ENCODE measurements at regions of chr17 and their contacts with region 1.

Region 1: DNA sequence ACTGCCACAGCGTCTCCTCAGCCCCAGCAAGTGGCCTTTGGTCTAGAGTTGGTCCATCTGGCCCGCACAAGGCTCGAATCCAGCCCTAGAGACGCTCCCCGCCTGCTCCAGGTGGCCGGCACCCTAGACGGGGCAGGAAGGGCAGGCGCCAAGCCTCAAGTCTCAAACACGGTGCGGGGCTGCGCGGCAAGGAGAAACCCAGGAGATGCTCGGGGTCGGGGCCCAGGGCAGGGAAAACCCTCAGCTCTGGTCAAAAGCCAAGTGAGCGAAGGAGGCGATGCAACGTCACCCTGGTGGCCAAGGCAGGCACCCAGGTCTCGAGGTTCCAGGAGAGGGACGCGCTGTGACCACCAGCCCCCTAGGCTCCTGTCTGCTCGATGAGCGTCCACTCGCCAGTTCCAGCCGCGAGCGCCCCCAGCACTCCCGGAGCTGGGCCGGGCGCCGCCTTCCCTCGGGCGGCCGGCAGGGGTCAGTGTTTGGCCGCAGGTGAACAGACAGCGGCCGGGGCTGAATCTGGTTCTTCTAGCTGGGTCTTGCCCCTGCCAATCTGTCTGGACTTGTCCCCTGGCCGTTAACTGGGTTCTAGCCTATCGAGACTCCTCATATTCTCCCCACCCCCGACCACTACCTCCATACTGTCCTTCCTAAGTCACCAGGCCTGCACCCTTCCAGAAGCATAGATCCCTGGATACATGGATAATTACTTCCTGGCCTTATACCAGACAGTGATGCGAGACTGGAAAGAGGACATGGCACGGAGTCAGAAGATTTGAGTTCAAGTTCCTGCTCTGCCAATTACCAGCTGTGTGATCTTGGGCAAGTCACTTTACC is 44.0 kb downstream of the PRAC1 start:
- DNase-seq: peak; percentile 89
- ATAC-seq: peak; percentile 95
- H3K4me3 Mint-ChIP-seq: peak overlapping the region; percentile 64
- H3K27ac Mint-ChIP-seq: no peak overlapping the region
- H3K4me1 Mint-ChIP-seq: peaks cover 7% of the 10 kb centered on the region
- H3K27me3 Mint-ChIP-seq: peaks cover 37% of the 10 kb centered on the region
- CTCF ChIP-seq: peak; percentile 95

Region 2: GRCh38 chr17:48642439-48643263 is 35.7 kb before region 1 on chr17:
- CTCF ChIA-PET with region 1: interaction called, 17 read pairs
- POLR2A ChIA-PET with region 1: no interaction called
- DNase-seq: peak; percentile 80
- ATAC-seq: peak; percentile 68
- H3K4me3 Mint-ChIP-seq: peak overlapping the region; percentile 56
- H3K27ac Mint-ChIP-seq: no peak overlapping the region
- H3K4me1 Mint-ChIP-seq: peaks cover 27% of the 10 kb centered on the region
- H3K27me3 Mint-ChIP-seq: peaks cover 100% of the 10 kb centered on the region; the same call in 1 of the 2 replicates
- CTCF ChIP-seq: no peak

Region 3: GRCh38 chr17:48704361-48705248 is 26.2 kb after region 1 on chr17:
- CTCF ChIA-PET with region 1: interaction called, 41 read pairs
- POLR2A ChIA-PET with region 1: interaction called, 3 read pairs
- DNase-seq: no peak
- ATAC-seq: no peak
- H3K4me3 Mint-ChIP-seq: no peak overlapping the region
- H3K27ac Mint-ChIP-seq: no peak overlapping the region
- H3K4me1 Mint-ChIP-seq: peaks cover 9% of the 10 kb centered on the region; the same call in 1 of the 2 replicates
- H3K27me3 Mint-ChIP-seq: peaks cover 57% of the 10 kb centered on the region
- CTCF ChIP-seq: no peak

Region 4: GRCh38 chr17:48724251-48725003 is 46.1 kb after region 1 on chr17:
- CTCF ChIA-PET with region 1: interaction called, 218 read pairs
- POLR2A ChIA-PET with region 1: no interaction called
- DNase-seq: peak; percentile 86
- ATAC-seq: no peak
- H3K4me3 Mint-ChIP-seq: peak overlapping the region; percentile 70
- H3K27ac Mint-ChIP-seq: no peak overlapping the region
- H3K4me1 Mint-ChIP-seq: peaks cover 50% of the 10 kb centered on the region
- H3K27me3 Mint-ChIP-seq: peaks cover 100% of the 10 kb centered on the region
- CTCF ChIP-seq: peak; percentile 49; the same call in 1 of the 2 replicates

Region 5: DNA sequence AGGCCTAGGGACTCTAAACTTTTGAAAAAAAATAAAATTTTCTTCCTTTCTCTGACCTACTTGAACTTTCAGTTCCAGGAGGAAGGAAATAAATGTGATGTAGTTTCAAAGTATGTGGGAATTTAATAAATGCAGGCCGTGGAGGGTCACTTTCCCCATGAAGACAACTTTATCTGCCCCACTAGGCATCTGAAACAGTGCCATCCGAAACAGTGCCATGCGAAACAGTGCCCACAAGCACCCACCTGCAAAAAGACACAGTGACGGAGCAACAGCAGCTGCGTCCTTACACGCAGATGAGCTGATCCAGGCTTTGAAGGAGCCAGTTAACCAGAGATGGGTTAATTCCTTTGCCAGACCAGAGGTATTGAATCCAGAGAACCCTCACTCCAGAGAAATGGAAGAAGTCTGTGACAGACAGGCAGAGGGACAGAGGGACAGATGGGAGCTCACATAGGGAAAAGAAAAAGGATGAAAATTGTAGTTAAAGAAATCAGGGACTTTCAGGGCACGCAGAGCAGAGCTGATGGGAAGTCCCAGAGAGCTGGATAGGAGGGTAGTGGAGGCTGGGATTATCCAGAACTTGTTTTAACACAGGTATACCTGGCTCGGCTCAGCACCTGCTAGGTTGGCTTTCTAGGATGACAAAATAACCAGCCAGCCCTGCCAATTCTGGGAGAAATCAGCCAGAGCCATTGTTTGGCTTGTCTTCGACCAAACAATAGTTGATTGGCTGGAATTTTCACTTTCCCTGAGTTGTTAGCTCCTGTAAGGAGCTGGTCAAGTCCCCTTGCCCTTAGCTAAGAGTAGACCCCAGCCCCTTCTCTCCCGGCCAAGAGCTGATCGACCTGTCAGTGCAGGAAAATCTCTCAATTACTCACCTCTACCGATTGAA is 67.3 kb after region 1 on chr17:
- CTCF ChIA-PET with region 1: interaction called, 29 read pairs
- POLR2A ChIA-PET with region 1: no interaction called
- DNase-seq: no peak
- ATAC-seq: no peak
- H3K4me3 Mint-ChIP-seq: no peak overlapping the region
- H3K27ac Mint-ChIP-seq: no peak overlapping the region
- H3K4me1 Mint-ChIP-seq: peaks cover 29% of the 10 kb centered on the region
- H3K27me3 Mint-ChIP-seq: peaks cover 100% of the 10 kb centered on the region
- CTCF ChIP-seq: no peak

Region 6: DNA sequence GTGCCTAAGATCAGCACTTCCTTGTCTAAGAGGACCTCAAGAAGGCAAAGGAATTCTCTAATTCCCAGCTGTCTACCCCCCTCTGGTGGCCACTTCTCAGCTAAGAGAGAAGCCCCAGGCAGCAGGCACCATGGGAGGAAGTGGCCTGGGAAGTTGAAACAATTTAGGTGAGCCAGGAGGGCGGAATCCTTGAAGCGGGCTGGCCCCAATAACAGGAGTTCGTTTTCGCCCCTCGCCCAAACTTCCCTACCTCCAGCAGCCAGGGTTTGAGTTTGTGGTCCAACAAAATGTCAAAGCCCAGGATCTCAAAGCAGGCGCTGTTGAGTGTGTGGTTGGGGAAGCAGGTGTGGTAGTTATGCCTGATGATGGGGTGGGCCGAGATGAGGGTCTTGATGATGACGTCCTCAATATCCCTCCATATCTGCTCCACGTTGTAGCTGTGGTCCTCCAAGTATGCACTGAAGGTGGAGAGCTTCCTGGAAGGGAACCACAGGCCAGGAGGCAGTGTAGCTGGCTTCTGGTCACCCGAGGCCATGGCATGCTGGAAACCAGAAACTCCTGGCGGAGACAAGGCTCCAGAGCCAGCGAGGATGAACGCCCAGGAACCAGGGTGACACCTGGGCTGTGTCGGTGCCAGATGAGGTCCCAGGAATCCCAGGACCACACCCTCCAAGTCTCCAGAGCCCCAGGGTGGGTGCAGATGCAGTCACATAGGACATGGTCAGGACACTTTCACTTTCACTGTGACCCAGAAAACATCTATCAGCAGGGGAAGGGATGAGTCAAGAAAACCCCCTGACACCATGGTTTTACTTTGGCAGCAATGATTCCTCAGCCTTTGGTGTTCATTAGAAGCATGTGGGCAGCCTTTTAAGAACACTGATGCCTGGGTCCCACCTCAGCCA is 113.0 kb after region 1 on chr17:
- CTCF ChIA-PET with region 1: interaction called, 148 read pairs
- POLR2A ChIA-PET with region 1: interaction called, 5 read pairs
- DNase-seq: peak; percentile 85
- ATAC-seq: peak; percentile 92
- H3K4me3 Mint-ChIP-seq: no peak overlapping the region
- H3K27ac Mint-ChIP-seq: no peak overlapping the region
- H3K4me1 Mint-ChIP-seq: peaks cover 9% of the 10 kb centered on the region
- H3K27me3 Mint-ChIP-seq: peaks cover 2% of the 10 kb centered on the region; the same call in 1 of the 2 replicates
- CTCF ChIP-seq: peak; percentile 45; the same call in 1 of the 2 replicates

Region 7: DNA sequence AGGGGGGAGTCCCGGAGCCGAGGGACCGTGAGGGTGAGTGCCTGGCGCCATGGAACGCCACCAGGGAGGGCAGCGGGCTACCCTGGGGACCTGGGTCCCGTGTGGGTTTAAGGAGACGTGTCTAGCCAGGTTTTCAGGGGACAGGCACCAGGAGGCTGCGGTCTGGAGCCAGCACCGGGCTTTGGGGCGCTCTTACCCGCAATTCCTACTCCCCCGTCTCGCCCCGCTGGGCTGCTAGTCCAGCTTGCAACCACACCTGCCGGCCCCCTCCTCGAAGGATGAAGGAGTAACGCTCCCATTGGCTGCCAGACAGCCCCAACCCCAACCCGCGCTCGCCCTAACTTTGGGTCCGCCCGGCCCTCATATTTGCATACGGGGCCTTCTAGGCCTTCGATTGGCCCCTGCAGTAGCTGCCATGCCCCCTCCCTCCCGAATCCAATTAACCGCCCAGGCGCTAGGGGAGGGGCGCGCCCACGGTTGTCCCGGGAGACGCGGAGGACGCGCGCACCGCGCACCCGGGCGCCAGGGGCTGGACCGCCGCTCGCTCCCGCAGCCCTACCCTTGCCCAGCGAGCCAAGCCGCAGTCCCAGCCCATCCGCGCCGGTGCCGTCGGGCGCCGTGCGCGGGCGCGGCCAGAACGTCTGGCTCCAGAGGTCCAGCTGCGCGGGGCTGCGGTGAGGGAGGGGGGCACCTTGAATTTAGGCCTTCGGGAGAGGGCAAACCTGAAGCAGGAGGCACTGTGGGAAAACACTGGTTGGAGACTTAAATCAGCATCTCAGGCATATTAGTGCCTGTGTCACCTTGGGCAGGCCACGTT is 138.6 kb after region 1 on chr17 and contains the start of gene TTLL6:
- CTCF ChIA-PET with region 1: interaction called, 29 read pairs
- POLR2A ChIA-PET with region 1: no interaction called
- DNase-seq: peak; percentile 97
- ATAC-seq: peak; percentile 95
- H3K4me3 Mint-ChIP-seq: peak within 1 kb of the TSS; percentile 94
- H3K27ac Mint-ChIP-seq: peak within 1 kb of the TSS; percentile 92
- H3K4me1 Mint-ChIP-seq: peaks cover 44% of the 10 kb centered on the region
- H3K27me3 Mint-ChIP-seq: peaks cover 5% of the 10 kb centered on the region; the same call in 1 of the 2 replicates
- CTCF ChIP-seq: no peak
- total RNA-seq, gene TTLL6: 3.4 to 7.0 TPM (median 4.6 TPM) in 3 replicates

Measured in WTC11 (cell line).